SK-N-SH (cell line): ENCODE measurements at regions of chr12 and their contacts with region 1.

Region 1: GRCh38 chr12:6867413-6868210 is at the start of gene TPI1:
- DNase-seq: peak; percentile 98
- H3K4me3 ChIP-seq: peak within 1 kb of the TSS; percentile 91 to 99
- H3K27ac ChIP-seq: peak within 1 kb of the TSS; percentile 84 to 95
- H3K4me1 ChIP-seq: peaks cover 33 to 42% of the 10 kb centered on the region in 2 experiments
- H3K27me3 ChIP-seq: no peaks in the 10 kb centered on the region
- CTCF ChIP-seq: no peak
- EP300 ChIP-seq: no peak; a peak in 1 of 4 replicates
- RAD21 ChIP-seq: no peak
- polyA plus RNA-seq, gene TPI1: 1,175 and 1,316 TPM in 2 replicates

Region 2: DNA sequence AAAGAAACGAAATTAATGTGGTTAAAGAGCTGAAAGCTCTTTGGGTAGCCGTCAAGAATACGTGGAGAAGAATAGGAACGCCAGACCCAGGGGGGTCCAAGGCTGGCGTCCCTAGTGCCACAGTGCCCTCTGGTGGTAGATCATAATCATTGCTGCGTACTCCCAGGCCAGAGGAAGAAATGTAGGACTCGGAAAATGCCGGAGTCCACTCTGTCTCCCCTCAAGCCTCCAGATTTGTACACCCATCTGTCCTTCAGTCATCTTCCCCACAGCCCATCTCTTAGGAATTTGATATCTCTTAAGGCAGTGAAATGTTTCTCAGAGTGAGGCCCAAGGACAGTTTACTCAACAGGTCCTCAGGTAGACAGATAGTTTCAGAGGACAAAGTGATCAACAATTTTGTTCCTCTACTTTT is 582.5 kb before region 1 on chr12:
- CTCF ChIA-PET with region 1: no interaction called
- POLR2A ChIA-PET with region 1: no interaction called
- DNase-seq: peak; percentile 91
- H3K4me3 ChIP-seq: no peak overlapping the region; a peak in 1 of 4 replicates
- H3K27ac ChIP-seq: peak overlapping the region in 1 of 2 experiments; percentile 87; a peak in 3 of 4 replicates
- H3K4me1 ChIP-seq: peaks cover 6 to 35% of the 10 kb centered on the region in 2 experiments
- H3K27me3 ChIP-seq: no peaks in the 10 kb centered on the region
- CTCF ChIP-seq: peak; percentile 91
- EP300 ChIP-seq: no peak
- RAD21 ChIP-seq: peak; percentile 99

Region 3: GRCh38 chr12:6392504-6393077 is 475.0 kb before region 1 on chr12:
- CTCF ChIA-PET with region 1: no interaction called
- POLR2A ChIA-PET with region 1: no interaction called
- DNase-seq: no peak
- H3K4me3 ChIP-seq: no peak overlapping the region
- H3K27ac ChIP-seq: no peak overlapping the region
- H3K4me1 ChIP-seq: no peaks in the 10 kb centered on the region
- H3K27me3 ChIP-seq: no peaks in the 10 kb centered on the region
- CTCF ChIP-seq: no peak
- EP300 ChIP-seq: no peak
- RAD21 ChIP-seq: no peak

Region 4: DNA sequence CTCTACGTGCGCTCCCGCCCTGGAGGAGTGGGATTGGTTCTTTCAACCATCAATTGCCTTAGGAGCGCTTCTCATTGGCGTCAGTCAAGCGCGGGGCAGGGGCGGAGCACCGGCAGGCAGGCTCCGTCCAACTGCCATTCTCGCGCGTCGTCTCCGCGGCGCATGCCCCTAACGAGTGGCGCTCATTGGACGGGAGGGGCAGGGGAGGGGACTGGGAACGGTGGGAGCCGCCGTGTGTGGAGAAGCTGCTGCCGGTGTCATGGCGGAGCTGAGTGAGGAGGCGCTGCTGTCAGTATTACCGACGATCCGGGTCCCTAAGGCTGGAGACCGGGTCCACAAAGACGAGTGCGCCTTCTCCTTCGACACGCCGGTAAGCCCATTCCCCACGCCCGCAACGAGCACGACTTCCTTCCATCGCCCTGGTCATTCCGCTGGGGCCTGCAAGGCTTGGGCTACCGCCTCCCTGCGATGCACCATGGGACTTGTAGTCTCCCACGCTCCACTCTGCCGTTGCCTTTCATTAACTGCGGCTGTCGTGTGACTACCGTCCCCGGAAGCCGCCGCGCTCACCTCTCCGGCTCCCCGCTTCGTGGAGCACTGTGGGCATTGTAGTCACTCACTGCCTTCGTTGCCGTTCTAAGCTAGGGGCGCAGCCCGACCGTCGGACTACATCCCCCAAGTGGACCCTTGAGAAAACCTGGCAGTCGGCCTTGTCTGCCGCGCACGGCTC is 15.5 kb before region 1 on chr12 and contains the start of gene USP5:
- CTCF ChIA-PET with region 1: interaction called, 164 read pairs
- POLR2A ChIA-PET with region 1: interaction called, 57 read pairs
- DNase-seq: peak; percentile 92
- H3K4me3 ChIP-seq: peak within 1 kb of the TSS; percentile 70 to 76
- H3K27ac ChIP-seq: peak within 1 kb of the TSS; percentile 73 to 97
- H3K4me1 ChIP-seq: peaks cover 7 to 17% of the 10 kb centered on the region in 2 experiments
- H3K27me3 ChIP-seq: no peaks in the 10 kb centered on the region
- CTCF ChIP-seq: 0 out of 2 replicates have a peak, but pooled peaks have one; percentile 7
- EP300 ChIP-seq: no peak
- RAD21 ChIP-seq: no peak
- polyA plus RNA-seq, gene USP5: 97.2 and 100 TPM in 2 replicates

Region 5: GRCh38 chr12:6890789-6891645 is 23.4 kb after region 1 on chr12:
- CTCF ChIA-PET with region 1: interaction called, 122 read pairs
- POLR2A ChIA-PET with region 1: interaction called, 24 read pairs
- DNase-seq: peak; percentile 98
- H3K4me3 ChIP-seq: peak overlapping the region; percentile 44 to 63
- H3K27ac ChIP-seq: peak overlapping the region; percentile 89 to 96
- H3K4me1 ChIP-seq: peaks cover 6 to 9% of the 10 kb centered on the region in 2 experiments; a peak in 3 of 4 replicates
- H3K27me3 ChIP-seq: no peaks in the 10 kb centered on the region
- CTCF ChIP-seq: peak; percentile 79
- EP300 ChIP-seq: 0 out of 4 replicates have a peak, but pooled peaks of 1 of the 2 experiments have one; percentile 16
- RAD21 ChIP-seq: peak; percentile 58

Region 6: GRCh38 chr12:6914246-6914946 is 46.8 kb after region 1 on chr12 and contains the start of gene ENO2:
- CTCF ChIA-PET with region 1: interaction called, 14 read pairs
- POLR2A ChIA-PET with region 1: interaction called, 11 read pairs
- DNase-seq: peak; percentile 91
- H3K4me3 ChIP-seq: peak within 1 kb of the TSS; percentile 69 to 92
- H3K27ac ChIP-seq: peak within 1 kb of the TSS; percentile 49 to 82
- H3K4me1 ChIP-seq: peaks cover 14 to 18% of the 10 kb centered on the region in 2 experiments; a peak in 2 of 4 replicates
- H3K27me3 ChIP-seq: no peaks in the 10 kb centered on the region
- CTCF ChIP-seq: no peak
- EP300 ChIP-seq: no peak; a peak in 1 of 4 replicates
- RAD21 ChIP-seq: no peak
- polyA plus RNA-seq, gene ENO2: 50.6 and 56.9 TPM in 2 replicates

Region 7: GRCh38 chr12:6944381-6945186 is 77.0 kb after region 1 on chr12:
- CTCF ChIA-PET with region 1: interaction called, 54 read pairs
- POLR2A ChIA-PET with region 1: interaction called, 14 read pairs
- DNase-seq: peak; percentile 93
- H3K4me3 ChIP-seq: peak overlapping the region; percentile 67 to 72
- H3K27ac ChIP-seq: peak overlapping the region; percentile 89 to 98
- H3K4me1 ChIP-seq: peaks cover 6 to 13% of the 10 kb centered on the region in 2 experiments; a peak in 3 of 4 replicates
- H3K27me3 ChIP-seq: no peaks in the 10 kb centered on the region
- CTCF ChIP-seq: peak; percentile 76
- EP300 ChIP-seq: no peak
- RAD21 ChIP-seq: peak; percentile 82

Region 8: DNA sequence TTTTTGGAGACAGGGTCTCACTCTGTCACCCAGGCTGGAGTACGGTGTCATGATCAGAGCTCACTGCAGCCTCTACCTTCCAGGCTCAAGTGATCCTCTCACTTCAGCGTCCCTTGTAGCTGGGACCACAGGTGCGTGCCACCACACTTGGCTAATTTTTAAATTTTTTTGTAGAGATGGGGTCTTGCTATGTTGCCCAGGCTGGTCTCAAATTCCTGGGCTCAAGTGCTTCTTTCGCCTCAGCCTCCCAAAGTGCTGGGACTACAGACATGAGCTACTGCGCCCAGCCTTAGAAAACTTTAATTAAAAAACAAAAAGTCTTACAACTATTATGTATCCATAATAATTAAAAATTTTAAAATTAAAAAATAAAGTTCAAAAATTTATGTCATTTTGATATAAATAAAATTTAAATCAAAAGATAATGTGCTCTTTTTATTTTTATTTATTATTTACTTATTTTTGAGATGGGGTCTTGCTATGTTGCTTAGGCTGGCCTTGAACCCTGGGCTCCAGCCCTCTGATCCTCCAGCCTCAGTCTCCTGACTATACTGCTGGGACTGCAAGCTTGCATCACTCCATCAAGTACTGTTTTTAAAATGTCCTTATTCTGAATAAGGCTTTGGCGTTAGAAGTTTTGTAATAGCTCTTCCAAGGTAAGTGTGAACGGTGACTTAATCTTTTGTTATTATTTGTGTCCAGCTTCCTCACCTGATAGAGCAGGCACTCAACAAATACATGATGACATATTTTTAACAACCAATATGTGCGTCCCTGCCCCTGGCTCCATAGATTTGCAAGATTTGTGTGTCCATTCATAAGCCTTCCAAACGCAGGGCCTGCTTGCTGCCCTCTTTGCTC is 239.8 kb after region 1 on chr12:
- CTCF ChIA-PET with region 1: no interaction called
- POLR2A ChIA-PET with region 1: no interaction called
- DNase-seq: no peak
- H3K4me3 ChIP-seq: peak overlapping the region; percentile 55 to 56
- H3K27ac ChIP-seq: peak overlapping the region; percentile 61 to 83; a peak in 3 of 4 replicates
- H3K4me1 ChIP-seq: peaks cover 0 to 15% of the 10 kb centered on the region in 2 experiments; a peak in 1 of 4 replicates
- H3K27me3 ChIP-seq: no peaks in the 10 kb centered on the region
- CTCF ChIP-seq: no peak
- EP300 ChIP-seq: no peak
- RAD21 ChIP-seq: no peak

Region 9: GRCh38 chr12:7175493-7175892 is 307.9 kb after region 1 on chr12:
- CTCF ChIA-PET with region 1: no interaction called
- POLR2A ChIA-PET with region 1: no interaction called
- DNase-seq: no peak
- H3K4me3 ChIP-seq: no peak overlapping the region
- H3K27ac ChIP-seq: no peak overlapping the region
- H3K4me1 ChIP-seq: no peaks in the 10 kb centered on the region
- H3K27me3 ChIP-seq: no peaks in the 10 kb centered on the region; the same call in 1 of the 2 replicates
- CTCF ChIP-seq: no peak
- EP300 ChIP-seq: no peak
- RAD21 ChIP-seq: no peak